ENCODE measurements at regions of chr15 and their contacts with region 1.

Region 1: DNA sequence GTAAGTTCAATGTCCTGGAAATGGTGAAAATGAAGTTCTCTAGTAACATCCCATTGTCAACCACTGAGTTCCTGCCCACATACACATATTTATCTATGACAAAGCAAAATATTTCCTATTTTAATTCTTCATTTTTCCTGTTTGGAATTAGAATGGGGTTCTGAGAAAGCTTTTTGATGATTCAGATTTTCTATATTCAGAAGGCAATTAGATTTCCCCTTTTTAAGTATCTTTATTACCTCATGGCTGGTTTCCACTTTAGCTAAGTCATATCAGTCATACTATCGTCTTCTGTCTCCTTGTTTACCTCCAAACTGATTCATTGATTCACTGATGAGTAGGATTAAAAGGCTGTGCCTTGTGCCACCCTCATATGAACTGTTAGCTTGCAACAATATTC is 17.9 kb downstream of the ETFA start:
- DNase-seq: peak; percentile 16
- H3K4me3 Mint-ChIP-seq: no peak overlapping the region
- H3K27ac Mint-ChIP-seq: no peak overlapping the region
- H3K4me1 Mint-ChIP-seq: peaks cover 26% of the 10 kb centered on the region
- H3K27me3 Mint-ChIP-seq: no peaks in the 10 kb centered on the region

Region 2: DNA sequence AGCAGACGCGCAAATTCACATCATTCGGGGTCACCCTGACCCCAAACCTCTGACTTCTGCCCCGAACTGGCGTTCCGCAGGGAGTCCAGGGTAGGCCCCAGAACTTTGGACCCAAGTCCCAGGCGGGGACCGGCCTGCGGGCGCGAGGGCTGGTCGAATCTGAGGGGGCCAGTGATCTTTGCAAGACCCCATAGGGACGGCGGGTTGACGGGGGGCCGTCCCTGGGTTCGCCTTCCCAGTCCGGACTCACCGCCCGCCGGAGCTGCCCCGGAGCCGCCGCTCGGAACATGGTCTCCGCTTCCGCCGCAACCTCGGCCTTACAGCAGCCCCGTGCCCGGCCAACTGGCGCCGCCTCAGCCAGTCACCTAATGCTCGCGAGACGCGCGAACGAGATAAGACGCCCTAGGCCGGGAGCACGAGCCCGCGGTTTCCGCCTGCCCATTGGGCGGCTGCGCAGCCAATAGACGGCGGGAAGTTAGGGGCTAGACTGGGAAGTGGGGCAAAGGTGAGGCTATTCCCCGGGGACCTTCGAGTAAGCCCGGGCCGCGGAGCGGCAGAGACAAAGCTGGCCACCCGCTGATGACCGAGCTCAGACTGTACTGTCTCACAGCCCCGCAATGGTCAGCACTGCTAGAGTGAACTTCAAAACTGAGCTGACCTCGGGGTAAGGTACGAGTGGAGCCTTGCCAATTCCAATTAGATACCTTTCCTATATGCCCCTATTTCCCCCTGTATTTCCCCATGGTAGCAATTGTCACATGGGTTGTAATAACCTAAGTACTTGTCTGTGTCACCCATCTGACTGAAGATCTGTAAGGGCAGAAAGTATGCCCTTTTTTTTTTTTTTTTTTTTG is 18.0 kb after region 1 on chr15 and contains the start of gene ETFA:
- CTCF ChIA-PET with region 1: no interaction called
- intact Hi-C with region 1: loop called (anchors 1 kb)
- DNase-seq: peak; percentile 97
- H3K4me3 Mint-ChIP-seq: peak within 1 kb of the TSS; percentile 87
- H3K27ac Mint-ChIP-seq: peak within 1 kb of the TSS; percentile 77
- H3K4me1 Mint-ChIP-seq: peaks cover 29% of the 10 kb centered on the region
- H3K27me3 Mint-ChIP-seq: no peaks in the 10 kb centered on the region
- total RNA-seq, gene ETFA: 158 to 166 TPM

Region 3: GRCh38 chr15:76324066-76324465 is 30.7 kb after region 1 on chr15:
- CTCF ChIA-PET with region 1: no interaction called
- intact Hi-C with region 1: no loop called
- DNase-seq: no peak
- H3K4me3 Mint-ChIP-seq: no peak overlapping the region
- H3K27ac Mint-ChIP-seq: no peak overlapping the region
- H3K4me1 Mint-ChIP-seq: no peaks in the 10 kb centered on the region
- H3K27me3 Mint-ChIP-seq: peaks cover 26% of the 10 kb centered on the region

Region 4: GRCh38 chr15:76336254-76337058 is 43.1 kb after region 1 on chr15 and contains the start of gene ISL2:
- CTCF ChIA-PET with region 1: no interaction called
- intact Hi-C with region 1: loop called (anchors 5 kb)
- DNase-seq: peak; percentile 66
- H3K4me3 Mint-ChIP-seq: peak within 1 kb of the TSS; percentile 73
- H3K27ac Mint-ChIP-seq: no peak within 1 kb of the TSS
- H3K4me1 Mint-ChIP-seq: peaks cover 42% of the 10 kb centered on the region
- H3K27me3 Mint-ChIP-seq: peaks cover 73% of the 10 kb centered on the region
- total RNA-seq, gene ISL2: not detected

Region 5: GRCh38 chr15:76576523-76577279 is 283.3 kb after region 1 on chr15:
- CTCF ChIA-PET with region 1: no interaction called
- intact Hi-C with region 1: loop called (anchors 2 kb)
- DNase-seq: peak; percentile 35
- H3K4me3 Mint-ChIP-seq: no peak overlapping the region
- H3K27ac Mint-ChIP-seq: no peak overlapping the region
- H3K4me1 Mint-ChIP-seq: peaks cover 27% of the 10 kb centered on the region
- H3K27me3 Mint-ChIP-seq: no peaks in the 10 kb centered on the region